K562 (cell line): ENCODE measurements at regions of chr1 and their contacts with region 1.

Region 1: DNA sequence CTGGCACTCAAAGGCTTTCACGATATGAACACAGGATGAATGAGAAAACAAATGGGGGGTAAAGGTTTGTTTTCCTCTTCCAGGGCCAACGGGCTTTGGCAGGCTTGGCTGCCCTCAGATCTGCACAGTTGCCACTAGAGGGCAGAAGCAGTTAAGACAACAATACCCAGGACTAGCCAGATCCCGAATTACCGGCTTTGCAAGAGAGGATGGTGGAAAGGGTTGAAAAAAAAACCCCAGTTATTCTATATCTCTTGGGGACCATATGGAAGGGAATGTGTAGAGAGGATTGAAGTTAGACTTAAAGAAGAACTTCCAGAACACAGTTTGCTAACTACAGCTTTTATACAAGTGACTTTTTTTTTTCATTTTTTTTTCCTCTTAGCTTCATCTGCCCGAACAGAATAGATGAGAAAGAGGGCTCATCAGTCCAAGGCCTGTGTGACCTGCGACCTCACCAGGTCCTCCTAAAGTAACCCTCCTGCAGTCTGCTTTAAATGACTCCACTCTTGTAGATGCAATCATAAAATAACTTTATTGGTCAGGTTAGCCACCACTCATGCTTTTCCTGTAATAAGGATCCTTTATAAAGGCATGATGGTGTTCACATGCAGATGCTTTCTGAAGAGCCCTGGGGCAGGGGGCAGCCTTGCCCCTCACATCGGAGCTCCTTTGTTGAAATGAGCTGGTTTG is 10.7 kb downstream of the FMOD start:
- DNase-seq: peak; percentile 84 to 88 (median 88)
- ATAC-seq: peak; percentile 87
- H3K4me3 ChIP-seq: no peak overlapping the region
- H3K27ac ChIP-seq: no peak overlapping the region
- H3K4me1 ChIP-seq: peaks cover 0 to 4% of the 10 kb centered on the region in 2 experiments; a peak in 3 of 5 replicates
- H3K27me3 ChIP-seq: peaks cover 26 to 44% of the 10 kb centered on the region in 2 experiments
- CTCF ChIP-seq: peak; percentile 93 to 97 (median 94)
- EP300 ChIP-seq: no peak
- POLR2A ChIP-seq: no peak
- RAD21 ChIP-seq: peak; percentile 93 to 94

Region 2: DNA sequence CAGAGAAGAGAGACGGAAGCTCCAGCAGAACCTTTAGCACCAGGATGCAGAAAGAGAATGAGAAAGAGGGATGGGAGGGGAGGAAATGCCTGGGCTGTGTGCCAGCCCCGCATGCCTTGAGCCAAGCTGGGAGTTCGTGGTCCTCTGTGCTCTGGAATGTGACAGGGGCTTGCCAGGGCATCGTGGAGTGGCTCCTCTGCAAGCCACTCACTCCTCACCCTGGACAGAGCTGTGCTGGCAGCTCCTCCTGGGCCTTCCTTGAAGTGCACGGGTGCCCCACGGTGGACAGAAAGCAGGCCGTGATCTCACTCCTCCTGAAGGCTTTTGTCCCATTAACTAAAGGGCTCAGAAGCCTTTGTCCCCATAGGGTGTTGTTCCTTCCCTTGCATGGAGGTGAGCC is 100.5 kb after region 1 on chr1:
- CTCF ChIA-PET with region 1: interaction called, 27 read pairs
- POLR2A ChIA-PET with region 1: interaction called, 4 read pairs
- in situ Hi-C with region 1: loop called (anchors 5 kb)
- intact Hi-C with region 1: loop called (anchors 1 kb)
- DNase-seq: peak in 1 of 4 experiments; percentile 24
- ATAC-seq: peak; percentile 68
- H3K4me3 ChIP-seq: no peak overlapping the region
- H3K27ac ChIP-seq: no peak overlapping the region
- H3K4me1 ChIP-seq: no peaks in the 10 kb centered on the region
- H3K27me3 ChIP-seq: peaks cover 16 to 39% of the 10 kb centered on the region in 2 experiments; a peak in 3 of 5 replicates
- CTCF ChIP-seq: peak; percentile 28 to 48 (median 47); a peak in 4 of 6 replicates
- EP300 ChIP-seq: no peak
- POLR2A ChIP-seq: no peak
- RAD21 ChIP-seq: peak; percentile 49 to 64

Region 3: DNA sequence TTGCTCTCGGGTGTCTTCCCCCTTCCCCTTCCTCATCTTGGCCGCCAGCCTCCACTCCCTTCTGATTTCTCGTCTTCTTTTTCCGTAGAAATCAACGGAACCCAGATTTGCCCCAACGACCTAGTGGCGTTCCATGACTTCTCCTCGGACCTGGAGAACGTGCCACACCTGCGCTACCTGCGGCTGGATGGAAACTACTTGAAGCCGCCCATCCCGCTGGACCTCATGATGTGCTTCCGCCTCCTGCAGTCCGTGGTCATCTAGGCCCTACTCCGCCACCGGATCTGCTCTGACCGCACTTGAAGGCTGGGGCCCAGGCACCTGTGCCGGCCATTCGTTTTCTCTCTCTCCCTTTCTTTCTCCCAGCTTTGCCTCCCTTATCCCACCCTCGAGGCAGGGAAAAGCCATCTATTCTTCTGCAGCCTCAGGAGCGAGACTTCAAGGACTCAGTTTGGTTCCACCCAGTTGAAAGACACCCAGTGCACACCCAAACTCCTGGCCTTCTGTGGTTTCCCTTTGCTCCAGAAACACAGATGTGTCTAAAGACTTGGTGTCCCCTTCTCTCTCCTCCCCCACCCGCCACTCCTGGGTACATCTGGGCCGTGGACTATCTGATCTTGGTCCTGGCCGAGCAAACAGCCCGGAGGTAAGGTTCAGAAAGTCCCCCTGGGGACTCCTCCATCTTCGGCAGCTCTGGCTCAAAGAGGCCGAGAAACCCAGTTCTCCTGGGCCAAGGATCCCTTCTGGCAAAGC is 146.5 kb after region 1 on chr1:
- CTCF ChIA-PET with region 1: interaction called, 40 read pairs
- POLR2A ChIA-PET with region 1: interaction called, 3 read pairs
- in situ Hi-C with region 1: loop called (anchors 5 kb)
- intact Hi-C with region 1: loop called (anchors 1 kb)
- DNase-seq: no peak
- ATAC-seq: peak; percentile 5
- H3K4me3 ChIP-seq: peak overlapping the region; percentile 38; the same call in 1 of the 2 replicates
- H3K27ac ChIP-seq: no peak overlapping the region
- H3K4me1 ChIP-seq: peaks cover 0 to 14% of the 10 kb centered on the region in 2 experiments; a peak in 2 of 5 replicates
- H3K27me3 ChIP-seq: peaks cover 34 to 45% of the 10 kb centered on the region in 2 experiments
- CTCF ChIP-seq: no peak
- EP300 ChIP-seq: no peak
- POLR2A ChIP-seq: no peak
- RAD21 ChIP-seq: no peak